Naive thymus-derived CD4-positive, alpha-beta T cell (primary cell): ENCODE measurements at regions of chr6 and their contacts with region 1.

Region 1: GRCh38 chr6:30717042-30717844 is at the start of gene MDC1:
- DNase-seq: peak; percentile 83 to 100 (median 99)
- ATAC-seq: peak; percentile 84
- H3K4me3 ChIP-seq: peak within 1 kb of the TSS; percentile 73
- H3K4me3 Mint-ChIP-seq: peak within 1 kb of the TSS; percentile 90 to 99 (median 96)
- H3K27ac ChIP-seq: peak within 1 kb of the TSS; percentile 84
- H3K27ac Mint-ChIP-seq: peak within 1 kb of the TSS; percentile 97 to 100 (median 99)
- H3K4me1 ChIP-seq: peaks cover 20 to 22% of the 10 kb centered on the region in 2 donors
- H3K4me1 Mint-ChIP-seq: peaks cover 30 to 60% (median 52%) of the 10 kb centered on the region in 7 donors
- H3K27me3 ChIP-seq: no peaks in the 10 kb centered on the region
- H3K27me3 Mint-ChIP-seq: no peaks in the 10 kb centered on the region
- total RNA-seq, gene MDC1: 40.3 to 78.9 (median 62.0) TPM

Region 2: DNA sequence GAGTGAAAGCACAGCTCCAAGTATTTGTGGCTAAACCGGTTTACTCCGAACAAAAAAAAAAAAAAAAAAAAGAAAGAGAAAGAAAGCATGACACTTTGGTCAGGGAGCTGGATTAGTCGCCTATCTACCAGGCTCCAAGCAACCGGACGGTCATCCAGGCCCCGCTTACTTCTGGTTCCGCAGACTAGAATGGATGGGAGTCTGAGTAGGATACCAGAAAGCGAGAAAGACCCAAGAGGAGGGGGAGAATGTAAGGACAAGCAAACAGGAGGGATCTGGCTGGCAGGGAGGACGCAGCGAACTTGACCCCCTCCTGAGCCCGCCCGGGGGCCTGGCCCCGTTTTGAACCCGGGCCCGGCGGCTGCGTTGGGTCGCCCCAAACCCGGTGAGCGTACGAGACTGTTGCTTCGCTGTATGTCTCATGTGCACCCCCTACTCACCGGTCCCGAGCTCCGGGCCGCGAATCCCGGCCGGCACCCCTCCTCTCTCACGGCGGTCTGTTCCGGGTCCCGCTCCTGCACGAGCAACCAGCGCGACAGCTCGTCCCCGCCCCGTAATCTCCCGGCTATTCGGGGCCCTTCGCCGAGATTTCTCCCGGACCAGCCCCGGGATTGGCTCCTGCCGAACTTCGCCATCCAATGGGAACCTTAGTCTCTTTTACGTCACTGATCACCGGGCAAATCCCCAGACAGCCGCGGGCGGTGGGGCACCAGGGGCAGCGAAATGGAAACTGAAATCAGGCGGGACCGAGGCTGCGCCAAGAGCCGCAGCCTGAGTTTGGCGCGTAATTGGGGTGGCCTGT is 504.2 kb before region 1 on chr6 and contains the start of gene TRIM26:
- CTCF ChIA-PET with region 1: no interaction called
- POLR2A ChIA-PET with region 1: no interaction called
- intact Hi-C with region 1: loop called in 1 of 2 experiments (anchors 1 kb)
- DNase-seq: peak; percentile 88 to 99 (median 97)
- ATAC-seq: peak; percentile 94
- H3K4me3 ChIP-seq: peak within 1 kb of the TSS; percentile 83
- H3K4me3 Mint-ChIP-seq: peak within 1 kb of the TSS; percentile 89 to 100 (median 96)
- H3K27ac ChIP-seq: peak within 1 kb of the TSS; percentile 99
- H3K27ac Mint-ChIP-seq: peak within 1 kb of the TSS; percentile 96 to 100 (median 99)
- H3K4me1 ChIP-seq: peaks cover 32 to 39% of the 10 kb centered on the region in 2 donors
- H3K4me1 Mint-ChIP-seq: peaks cover 47 to 62% (median 52%) of the 10 kb centered on the region in 7 donors
- H3K27me3 ChIP-seq: no peaks in the 10 kb centered on the region
- H3K27me3 Mint-ChIP-seq: peaks cover 0 to 5% (median 0%) of the 10 kb centered on the region in 5 donors
- total RNA-seq, gene TRIM26: 40.1 to 73.1 (median 49.1) TPM

Region 3: DNA sequence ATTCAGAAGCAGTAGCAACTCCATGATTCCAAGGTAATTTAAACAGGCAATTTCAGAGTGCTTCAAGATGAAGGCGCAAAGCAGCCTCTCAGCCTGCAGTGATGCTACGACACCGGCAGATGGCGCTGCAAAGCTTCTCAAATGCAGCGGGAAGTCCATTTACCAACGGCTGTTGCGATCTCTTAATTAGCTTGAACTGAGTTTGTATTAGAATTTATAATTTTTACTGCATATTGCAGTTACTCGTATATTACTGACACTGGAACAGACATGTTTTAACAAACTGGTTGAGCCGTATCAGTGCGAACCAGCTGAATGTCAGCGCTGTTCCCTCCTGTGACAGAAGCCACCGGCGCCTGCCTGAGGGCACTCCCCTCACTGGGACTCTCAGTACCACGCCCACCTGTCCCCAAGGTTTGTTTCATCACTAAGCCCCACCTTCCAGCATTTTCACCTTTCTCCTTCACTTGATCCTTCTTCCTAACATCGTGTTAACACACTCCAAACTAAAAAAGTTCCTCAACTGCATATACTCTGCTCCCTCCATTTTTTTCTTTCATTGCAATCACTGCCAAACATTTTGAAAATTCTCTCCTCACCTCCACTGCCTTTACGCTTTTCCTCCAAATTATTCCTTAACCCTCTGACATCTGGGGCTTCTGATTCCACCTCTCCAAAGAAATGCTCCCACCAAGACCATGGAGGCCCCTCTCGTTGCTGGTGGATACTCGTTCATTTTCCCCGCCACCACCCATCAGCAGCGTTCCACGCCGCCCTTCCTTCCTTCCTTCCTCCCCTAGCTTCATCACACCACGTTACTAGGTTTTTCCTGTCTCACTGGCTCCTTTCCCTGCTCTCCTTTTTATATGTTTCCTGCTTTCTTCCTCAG is 175.5 kb before region 1 on chr6:
- CTCF ChIA-PET with region 1: no interaction called
- POLR2A ChIA-PET with region 1: interaction called, 13 read pairs
- intact Hi-C with region 1: loop called in 1 of 2 experiments (anchors 1 kb)
- DNase-seq: peak; percentile 60 to 84 (median 81)
- ATAC-seq: peak; percentile 84
- H3K4me3 ChIP-seq: peak overlapping the region; percentile 64
- H3K4me3 Mint-ChIP-seq: peak overlapping the region; percentile 83 to 92 (median 86)
- H3K27ac ChIP-seq: peak overlapping the region; percentile 67
- H3K27ac Mint-ChIP-seq: peak overlapping the region; percentile 82 to 96 (median 93)
- H3K4me1 ChIP-seq: peaks cover 26 to 29% of the 10 kb centered on the region in 2 donors
- H3K4me1 Mint-ChIP-seq: peaks cover 29 to 38% (median 35%) of the 10 kb centered on the region in 7 donors
- H3K27me3 ChIP-seq: no peaks in the 10 kb centered on the region
- H3K27me3 Mint-ChIP-seq: peaks cover 0 to 3% (median 0%) of the 10 kb centered on the region in 5 donors

Region 4: GRCh38 chr6:30646458-30647241 is 70.6 kb before region 1 on chr6 and contains the start of gene C6orf136:
- CTCF ChIA-PET with region 1: interaction called, 6 read pairs
- POLR2A ChIA-PET with region 1: interaction called, 3 read pairs
- intact Hi-C with region 1: loop called (anchors 1 kb)
- DNase-seq: peak in 8 of 9 donors; percentile 77 to 94 (median 92)
- ATAC-seq: peak; percentile 90
- H3K4me3 ChIP-seq: peak within 1 kb of the TSS; percentile 93
- H3K4me3 Mint-ChIP-seq: peak within 1 kb of the TSS; percentile 82 to 93 (median 88)
- H3K27ac ChIP-seq: peak within 1 kb of the TSS; percentile 91
- H3K27ac Mint-ChIP-seq: peak within 1 kb of the TSS; percentile 79 to 93 (median 91)
- H3K4me1 ChIP-seq: peaks cover 11 to 17% of the 10 kb centered on the region in 2 donors
- H3K4me1 Mint-ChIP-seq: peaks cover 24 to 38% (median 32%) of the 10 kb centered on the region in 7 donors
- H3K27me3 ChIP-seq: no peaks in the 10 kb centered on the region
- H3K27me3 Mint-ChIP-seq: no peaks in the 10 kb centered on the region
- total RNA-seq, gene C6orf136: 23.7 to 38.0 (median 32.1) TPM

Region 5: GRCh38 chr6:30730601-30731435 is 13.6 kb after region 1 on chr6:
- CTCF ChIA-PET with region 1: interaction called, 41 read pairs
- POLR2A ChIA-PET with region 1: interaction called, 16 read pairs
- intact Hi-C with region 1: loop called in 1 of 2 experiments (anchors 1 kb)
- DNase-seq: peak; percentile 62 to 86 (median 81)
- ATAC-seq: peak; percentile 97
- H3K4me3 ChIP-seq: no peak overlapping the region
- H3K4me3 Mint-ChIP-seq: peak overlapping the region in 9 of 10 donors; percentile 27 to 69 (median 55)
- H3K27ac ChIP-seq: peak overlapping the region; percentile 52
- H3K27ac Mint-ChIP-seq: peak overlapping the region in 7 of 9 donors; percentile 29 to 79 (median 73)
- H3K4me1 ChIP-seq: peaks cover 14 to 30% of the 10 kb centered on the region in 2 donors
- H3K4me1 Mint-ChIP-seq: peaks cover 27 to 54% (median 42%) of the 10 kb centered on the region in 7 donors
- H3K27me3 ChIP-seq: no peaks in the 10 kb centered on the region
- H3K27me3 Mint-ChIP-seq: no peaks in the 10 kb centered on the region

Region 6: GRCh38 chr6:30759575-30760239 is 42.5 kb after region 1 on chr6:
- CTCF ChIA-PET with region 1: no interaction called
- POLR2A ChIA-PET with region 1: no interaction called
- intact Hi-C with region 1: no loop called
- DNase-seq: no peak
- ATAC-seq: no peak
- H3K4me3 ChIP-seq: no peak overlapping the region
- H3K4me3 Mint-ChIP-seq: no peak overlapping the region
- H3K27ac ChIP-seq: no peak overlapping the region
- H3K27ac Mint-ChIP-seq: no peak overlapping the region
- H3K4me1 ChIP-seq: peaks cover 0 to 12% of the 10 kb centered on the region in 2 donors
- H3K4me1 Mint-ChIP-seq: peaks cover 14 to 27% (median 24%) of the 10 kb centered on the region in 7 donors
- H3K27me3 ChIP-seq: no peaks in the 10 kb centered on the region
- H3K27me3 Mint-ChIP-seq: no peaks in the 10 kb centered on the region

Region 7: DNA sequence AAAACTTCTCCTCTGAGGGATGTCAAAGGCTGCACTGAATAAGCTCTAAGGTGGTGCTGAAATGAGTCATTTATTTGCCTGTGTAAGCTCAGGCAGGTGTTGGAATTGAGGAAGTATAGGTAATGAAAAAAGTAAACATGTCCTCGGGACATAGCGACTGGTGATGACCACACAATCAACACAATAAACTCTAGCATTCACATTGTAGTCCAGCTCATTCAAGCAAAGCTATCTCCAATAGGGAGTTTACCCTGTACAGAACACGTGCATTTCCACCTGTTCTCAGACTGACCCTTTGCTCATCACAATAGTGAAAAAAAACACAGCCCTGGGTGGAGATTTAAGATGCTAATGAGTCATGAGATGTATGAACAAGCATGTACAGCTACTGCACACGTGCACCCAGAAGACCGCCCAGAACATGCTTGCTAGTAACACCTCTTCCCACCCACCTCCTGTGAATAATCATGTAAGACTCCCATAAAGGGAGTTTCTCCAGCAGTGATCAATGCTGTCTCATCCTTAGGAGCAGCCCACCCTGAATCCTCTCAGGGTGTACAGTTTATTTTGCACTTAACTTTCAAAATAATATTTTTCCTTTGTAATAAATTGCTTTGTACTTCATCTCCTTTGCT is 486.2 kb after region 1 on chr6:
- CTCF ChIA-PET with region 1: no interaction called
- POLR2A ChIA-PET with region 1: no interaction called
- intact Hi-C with region 1: loop called in 1 of 2 experiments (anchors 5 kb)
- DNase-seq: peak in 3 of 9 donors; percentile 13 to 73 (median 55)
- ATAC-seq: peak; percentile 81
- H3K4me3 ChIP-seq: peak overlapping the region; percentile 67
- H3K4me3 Mint-ChIP-seq: peak overlapping the region; percentile 74 to 96 (median 89)
- H3K27ac ChIP-seq: peak overlapping the region; percentile 73
- H3K27ac Mint-ChIP-seq: peak overlapping the region; percentile 82 to 97 (median 96)
- H3K4me1 ChIP-seq: peaks cover 29 to 41% of the 10 kb centered on the region in 2 donors
- H3K4me1 Mint-ChIP-seq: peaks cover 49 to 73% (median 64%) of the 10 kb centered on the region in 7 donors
- H3K27me3 ChIP-seq: no peaks in the 10 kb centered on the region
- H3K27me3 Mint-ChIP-seq: no peaks in the 10 kb centered on the region